ENCODE measurements at regions of chr4 and their contacts with region 1.

Region 1: GRCh38 chr4:185811509-185812364 is at the start of gene SORBS2:
- DNase-seq: peak; percentile 92
- H3K4me3 ChIP-seq: peak within 1 kb of the TSS; percentile 78
- H3K27ac ChIP-seq: peak within 1 kb of the TSS; percentile 90
- H3K4me1 ChIP-seq: peaks cover 47% of the 10 kb centered on the region
- CTCF ChIP-seq: no peak
- total RNA-seq, gene SORBS2: 33.2 and 34.7 TPM in 2 replicates

Region 2: GRCh38 chr4:185479507-185479971 is 332.2 kb before region 1 on chr4:
- CTCF ChIA-PET with region 1: no interaction called
- POLR2A ChIA-PET with region 1: interaction called, 3 read pairs
- intact Hi-C with region 1: loop called (anchors 2 kb)
- DNase-seq: peak; percentile 79
- H3K4me3 ChIP-seq: peak overlapping the region; percentile 69
- H3K27ac ChIP-seq: peak overlapping the region; percentile 95
- H3K4me1 ChIP-seq: peaks cover 58% of the 10 kb centered on the region
- CTCF ChIP-seq: no peak

Region 3: DNA sequence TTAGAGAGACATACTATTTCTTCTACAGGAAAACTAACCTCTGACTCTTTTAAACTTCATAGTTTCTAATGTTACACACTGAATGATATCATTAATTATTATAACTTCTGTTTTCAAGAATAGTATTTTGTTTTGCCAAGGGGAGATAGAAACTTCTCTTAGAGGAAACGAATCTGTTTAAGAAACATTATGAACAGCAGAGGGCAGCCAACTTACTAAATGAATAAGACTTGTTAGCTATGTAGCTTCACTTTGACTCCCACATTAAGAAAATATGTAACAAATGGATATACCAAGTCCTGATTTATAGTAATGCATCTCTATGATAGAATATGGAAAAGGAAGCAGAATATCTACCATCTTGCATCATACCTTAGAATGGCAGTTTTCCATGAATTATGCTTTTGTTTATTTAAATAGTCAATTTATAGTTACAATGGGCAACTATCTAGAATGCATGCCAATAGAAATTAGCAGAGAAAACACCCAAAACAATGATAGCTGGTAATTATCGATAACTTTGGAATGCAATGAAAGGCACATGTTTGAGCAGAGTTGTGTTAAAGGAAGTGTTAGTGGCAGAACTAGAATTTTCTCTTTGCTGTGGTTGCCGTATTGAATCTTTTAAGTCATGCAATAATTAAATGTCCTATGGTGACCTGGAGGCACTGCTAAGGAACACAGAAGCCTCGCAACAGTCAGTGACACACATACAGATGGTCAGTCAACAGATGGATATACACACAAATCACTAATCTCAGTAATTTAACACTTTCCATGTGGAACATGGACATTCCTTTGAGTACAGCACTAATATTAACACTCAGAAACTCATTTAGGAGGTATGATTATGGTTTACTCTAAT is 170.7 kb before region 1 on chr4:
- CTCF ChIA-PET with region 1: no interaction called
- POLR2A ChIA-PET with region 1: no interaction called
- intact Hi-C with region 1: loop called (anchors 5 kb)
- DNase-seq: peak; percentile 81
- H3K4me3 ChIP-seq: no peak overlapping the region
- H3K27ac ChIP-seq: no peak overlapping the region
- H3K4me1 ChIP-seq: no peaks in the 10 kb centered on the region
- CTCF ChIP-seq: peak; percentile 84

Region 4: GRCh38 chr4:185881427-185881826 is 69.7 kb after region 1 on chr4:
- CTCF ChIA-PET with region 1: no interaction called
- POLR2A ChIA-PET with region 1: interaction called, 5 read pairs
- intact Hi-C with region 1: loop called (anchors 2 kb)
- DNase-seq: no peak
- H3K4me3 ChIP-seq: no peak overlapping the region
- H3K27ac ChIP-seq: no peak overlapping the region
- H3K4me1 ChIP-seq: peaks cover 16% of the 10 kb centered on the region
- CTCF ChIP-seq: no peak

Region 5: DNA sequence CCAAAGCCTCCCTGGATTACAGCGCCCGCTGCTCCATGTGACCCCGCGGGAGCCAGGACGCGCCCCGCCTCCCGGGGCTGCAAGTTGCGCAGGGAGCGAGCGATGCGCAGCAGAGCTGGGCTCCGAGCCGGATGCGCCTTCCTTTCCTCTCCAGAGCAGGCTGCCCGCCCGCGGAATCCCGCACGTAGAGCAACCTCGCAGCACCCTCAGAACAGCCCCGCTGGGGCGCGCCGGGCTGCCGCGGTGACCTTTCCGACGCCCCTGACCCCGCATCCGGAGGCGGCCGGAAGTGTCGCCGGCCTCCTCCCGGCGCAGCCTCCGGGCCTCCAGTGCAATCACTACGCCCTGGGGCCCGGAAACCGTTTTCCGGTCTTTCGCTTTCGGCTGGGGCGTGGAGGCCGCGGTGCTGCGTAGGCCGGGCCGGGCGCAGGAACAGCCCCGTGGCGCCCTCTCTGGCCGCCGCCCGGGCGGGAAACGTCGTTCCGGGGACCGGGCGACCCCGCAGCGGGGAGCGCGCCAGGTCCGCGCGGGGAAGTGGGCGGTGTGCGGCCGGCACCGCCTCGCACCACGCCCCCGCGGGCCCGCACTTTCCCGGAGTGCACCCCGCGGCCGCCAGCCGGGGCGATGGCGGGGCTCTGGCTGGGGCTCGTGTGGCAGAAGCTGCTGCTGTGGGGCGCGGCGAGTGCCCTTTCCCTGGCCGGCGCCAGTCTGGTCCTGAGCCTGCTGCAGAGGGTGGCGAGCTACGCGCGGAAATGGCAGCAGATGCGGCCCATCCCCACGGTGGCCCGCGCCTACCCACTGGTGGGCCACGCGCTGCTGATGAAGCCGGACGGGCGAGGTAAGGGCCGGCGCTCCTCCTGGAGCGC is 379.7 kb after region 1 on chr4 and contains the start of gene CYP4V2:
- CTCF ChIA-PET with region 1: no interaction called
- POLR2A ChIA-PET with region 1: no interaction called
- intact Hi-C with region 1: loop called (anchors 5 kb)
- DNase-seq: peak; percentile 92
- H3K4me3 ChIP-seq: peak within 1 kb of the TSS; percentile 82
- H3K27ac ChIP-seq: peak within 1 kb of the TSS; percentile 91
- H3K4me1 ChIP-seq: peaks cover 27% of the 10 kb centered on the region
- CTCF ChIP-seq: peak; percentile 61
- total RNA-seq, gene CYP4V2: 6.2 and 6.9 TPM in 2 replicates

Measured in OCI-LY7 (cell line).